Endothelial cell of umbilical vein (primary cell): ENCODE measurements at regions of chr4 and their contacts with region 1.

Region 1: DNA sequence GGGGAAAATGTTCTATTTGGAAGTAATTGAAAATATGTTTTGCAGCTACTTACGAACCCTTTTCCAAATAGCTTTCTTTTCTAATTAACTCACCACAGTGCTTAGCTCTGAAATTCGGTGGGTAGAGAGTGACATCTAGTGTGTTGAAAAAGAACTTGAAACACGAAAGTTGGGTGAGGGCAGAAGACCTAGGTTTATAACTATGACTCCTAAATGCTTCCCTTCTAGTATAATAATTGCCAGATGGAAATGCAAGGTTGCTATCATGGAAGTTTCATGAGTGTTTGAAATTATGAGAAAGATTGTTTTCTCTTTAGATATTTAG is 77.3 kb upstream of the NOCT start:
- DNase-seq: peak; percentile 59
- H3K4me3 ChIP-seq: no peak overlapping the region
- H3K27ac ChIP-seq: no peak overlapping the region
- H3K4me1 ChIP-seq: no peaks in the 10 kb centered on the region
- H3K27me3 ChIP-seq: no peaks in the 10 kb centered on the region
- CTCF ChIP-seq: peak in 1 of 2 donors; percentile 28
- POLR2A ChIP-seq: no peak

Region 2: DNA sequence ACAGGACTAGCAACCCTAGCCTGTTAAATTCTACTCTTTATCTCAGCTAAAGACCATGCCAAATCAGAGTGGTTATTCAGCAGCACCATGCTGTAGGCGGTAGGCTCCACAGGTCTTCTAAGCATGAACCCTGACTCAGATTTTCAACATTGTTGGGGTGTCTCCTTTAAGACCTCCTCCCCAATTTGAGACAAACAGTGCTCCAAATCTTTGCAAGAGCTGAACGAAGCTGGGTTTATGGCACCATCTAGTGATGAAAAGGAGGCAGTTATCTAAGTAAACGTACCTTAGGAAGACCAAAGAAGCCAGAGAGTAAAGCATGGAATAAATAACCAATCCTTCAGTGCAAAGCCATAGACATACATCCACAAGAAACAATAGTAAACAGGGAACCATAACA is 361.6 kb before region 1 on chr4:
- CTCF ChIA-PET with region 1: interaction called, 40 read pairs
- POLR2A ChIA-PET with region 1: no interaction called
- dilution Hi-C with region 1: no loop called
- intact Hi-C with region 1: no loop called
- DNase-seq: peak; percentile 57
- H3K4me3 ChIP-seq: no peak overlapping the region
- H3K27ac ChIP-seq: no peak overlapping the region
- H3K4me1 ChIP-seq: no peaks in the 10 kb centered on the region
- H3K27me3 ChIP-seq: peaks cover under 1 to 3% of the 10 kb centered on the region in 2 experiments
- CTCF ChIP-seq: peak; percentile 31 to 53
- POLR2A ChIP-seq: no peak

Region 3: DNA sequence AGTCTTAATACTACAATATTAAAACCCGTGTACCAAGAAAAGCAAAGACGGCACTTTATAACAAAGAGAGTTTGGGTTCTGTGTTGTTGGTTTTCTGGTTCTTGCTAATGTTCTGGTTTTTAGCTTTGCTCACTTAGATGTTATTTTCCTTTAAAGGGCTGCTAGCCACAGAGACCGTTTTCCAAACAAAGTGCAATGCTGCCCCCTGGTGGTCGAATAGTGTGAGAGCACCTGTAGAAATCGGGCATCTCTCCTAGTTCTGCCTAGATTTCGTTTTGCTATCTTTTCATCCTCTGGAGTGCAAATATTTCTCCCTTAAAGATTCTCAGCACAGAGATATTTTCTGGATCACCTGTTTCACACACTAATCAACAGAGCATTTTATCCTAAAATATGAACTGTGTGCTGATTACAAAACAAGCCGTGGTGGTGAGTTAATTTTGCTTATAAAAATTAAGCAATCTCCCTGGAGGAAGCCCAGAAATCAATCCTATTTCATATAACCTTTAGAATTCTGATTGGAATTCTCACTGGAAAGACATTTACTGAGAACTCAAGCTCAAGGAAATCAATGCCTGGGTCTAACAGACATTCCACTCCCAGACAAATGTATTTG is 257.2 kb before region 1 on chr4:
- CTCF ChIA-PET with region 1: interaction called, 24 read pairs
- POLR2A ChIA-PET with region 1: no interaction called
- dilution Hi-C with region 1: no loop called
- intact Hi-C with region 1: loop called (anchors 5 kb)
- DNase-seq: peak; percentile 58
- H3K4me3 ChIP-seq: no peak overlapping the region
- H3K27ac ChIP-seq: no peak overlapping the region
- H3K4me1 ChIP-seq: no peaks in the 10 kb centered on the region
- H3K27me3 ChIP-seq: peaks cover 24 to 48% of the 10 kb centered on the region in 2 experiments
- CTCF ChIP-seq: peak; percentile 72 to 76
- POLR2A ChIP-seq: no peak

Region 4: DNA sequence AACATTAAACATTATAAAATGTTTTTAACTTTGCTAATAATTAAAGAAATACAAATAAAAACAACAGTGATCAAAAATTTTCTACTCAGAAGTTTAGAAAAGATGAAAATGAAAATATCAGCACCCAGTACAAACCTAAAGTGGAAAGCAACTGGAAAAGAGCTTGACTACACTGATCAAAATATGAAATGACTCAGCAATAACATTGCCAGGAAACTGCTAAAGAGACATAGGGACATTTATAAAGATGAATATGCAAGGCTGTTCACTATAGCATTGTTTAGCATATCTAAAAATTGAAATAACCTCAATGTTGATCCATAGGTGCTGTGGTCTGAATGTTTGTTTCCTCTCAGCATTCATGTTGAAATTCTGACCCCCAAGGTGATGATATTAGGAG is 11.3 kb before region 1 on chr4:
- CTCF ChIA-PET with region 1: interaction called, 18 read pairs
- POLR2A ChIA-PET with region 1: no interaction called
- dilution Hi-C with region 1: no loop called
- intact Hi-C with region 1: no loop called
- DNase-seq: peak; percentile 21
- H3K4me3 ChIP-seq: no peak overlapping the region
- H3K27ac ChIP-seq: no peak overlapping the region
- H3K4me1 ChIP-seq: peaks cover 4% of the 10 kb centered on the region
- H3K27me3 ChIP-seq: no peaks in the 10 kb centered on the region
- CTCF ChIP-seq: no peak
- POLR2A ChIP-seq: no peak

Region 5: DNA sequence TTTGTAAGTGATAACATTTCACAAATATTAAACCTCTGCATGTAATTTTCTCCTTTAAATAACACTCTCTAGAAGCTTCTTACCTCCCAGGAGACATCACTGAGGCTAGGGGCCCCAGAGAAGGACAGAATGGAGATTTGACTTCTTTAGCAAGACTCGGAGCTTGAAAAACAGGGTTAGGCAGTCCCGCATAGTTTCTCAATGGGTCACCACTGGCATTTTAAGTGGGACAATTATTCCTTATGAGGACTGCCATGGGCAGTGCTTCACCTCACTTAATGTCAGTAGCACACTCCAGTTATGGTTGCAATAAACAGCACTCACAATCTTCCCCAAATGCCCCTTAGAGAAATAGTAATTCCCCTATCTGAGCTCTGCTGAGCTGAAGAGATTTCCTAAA is 10.6 kb after region 1 on chr4:
- CTCF ChIA-PET with region 1: interaction called, 21 read pairs
- POLR2A ChIA-PET with region 1: no interaction called
- dilution Hi-C with region 1: no loop called
- intact Hi-C with region 1: no loop called
- DNase-seq: no peak
- H3K4me3 ChIP-seq: no peak overlapping the region
- H3K27ac ChIP-seq: no peak overlapping the region
- H3K4me1 ChIP-seq: no peaks in the 10 kb centered on the region
- H3K27me3 ChIP-seq: no peaks in the 10 kb centered on the region
- CTCF ChIP-seq: no peak
- POLR2A ChIP-seq: no peak

Region 6: GRCh38 chr4:139108567-139109128 is 170.3 kb after region 1 on chr4:
- CTCF ChIA-PET with region 1: no interaction called
- POLR2A ChIA-PET with region 1: no interaction called
- dilution Hi-C with region 1: no loop called
- intact Hi-C with region 1: no loop called
- DNase-seq: no peak
- H3K4me3 ChIP-seq: no peak overlapping the region
- H3K27ac ChIP-seq: no peak overlapping the region
- H3K4me1 ChIP-seq: no peaks in the 10 kb centered on the region
- H3K27me3 ChIP-seq: no peaks in the 10 kb centered on the region
- CTCF ChIP-seq: no peak
- POLR2A ChIP-seq: no peak